Prostate gland (tissue), 2 donors: ENCODE measurements at regions of chr1 and their contacts with region 1.

Region 1: DNA sequence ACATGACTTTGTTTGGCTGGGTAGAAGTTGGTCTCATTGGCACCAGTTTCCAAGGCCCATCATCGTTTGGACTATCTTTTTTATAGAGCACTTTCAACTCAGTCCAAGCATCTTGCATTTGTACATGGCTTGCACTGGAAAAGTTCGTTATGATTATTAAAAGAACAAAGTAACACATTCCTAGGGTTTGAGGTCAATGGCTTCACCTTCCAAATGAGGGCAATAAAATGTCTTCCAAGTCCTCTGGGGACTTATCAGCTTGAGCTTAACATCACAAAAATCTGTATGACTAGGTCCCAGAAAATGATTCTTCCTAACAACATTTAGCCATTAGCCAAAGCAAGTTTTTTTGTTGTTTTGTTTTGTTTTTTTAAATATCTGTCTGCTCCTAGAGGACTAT is 610.8 kb downstream of the LMO4 start:
- DNase-seq: no peak
- H3K4me3 ChIP-seq: no peak overlapping the region
- H3K27ac ChIP-seq: peak overlapping the region in 1 of 2 donors; percentile 9
- H3K4me1 ChIP-seq: no peaks in the 10 kb centered on the region
- H3K27me3 ChIP-seq: no peaks in the 10 kb centered on the region
- CTCF ChIP-seq: no peak
- POLR2A ChIP-seq: no peak

Region 2: DNA sequence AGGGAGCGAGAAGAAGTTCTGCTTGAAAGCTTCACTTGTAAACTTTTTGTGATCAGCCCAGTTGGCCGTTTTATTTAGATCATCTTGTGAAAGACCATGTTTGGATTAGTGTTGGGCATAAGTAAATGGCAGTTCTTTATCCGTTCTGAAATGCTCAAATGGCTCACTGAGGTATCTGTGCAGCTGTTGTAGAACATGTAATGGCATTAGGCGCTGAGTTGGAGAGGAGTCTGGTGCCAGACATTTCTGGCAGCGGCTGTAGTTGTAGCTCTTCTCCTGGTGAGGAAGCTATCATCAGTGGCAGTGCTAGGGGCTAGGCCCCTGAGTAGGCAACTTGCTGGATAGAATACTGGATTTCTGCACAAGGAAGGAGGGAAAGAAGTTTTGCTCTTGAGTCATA is 289.1 kb before region 1 on chr1:
- intact Hi-C with region 1: no loop called
- DNase-seq: no peak
- H3K4me3 ChIP-seq: no peak overlapping the region
- H3K27ac ChIP-seq: no peak overlapping the region
- H3K4me1 ChIP-seq: no peaks in the 10 kb centered on the region
- H3K27me3 ChIP-seq: no peaks in the 10 kb centered on the region
- CTCF ChIP-seq: no peak
- POLR2A ChIP-seq: no peak

Region 3: GRCh38 chr1:87888446-87888845 is 51.0 kb before region 1 on chr1:
- intact Hi-C with region 1: loop called (anchors 10 kb)
- DNase-seq: peak; percentile 8
- H3K4me3 ChIP-seq: no peak overlapping the region
- H3K27ac ChIP-seq: peak overlapping the region in 1 of 2 donors; percentile 28
- H3K4me1 ChIP-seq: no peaks in the 10 kb centered on the region
- H3K27me3 ChIP-seq: no peaks in the 10 kb centered on the region
- CTCF ChIP-seq: no peak
- POLR2A ChIP-seq: no peak